Naive thymus-derived CD4-positive, alpha-beta T cell (primary cell): ENCODE measurements at regions of chr6 and their contacts with region 1.

Region 1: GRCh38 chr6:144447472-144447871 is 162.3 kb downstream of the UTRN start:
- DNase-seq: no peak
- ATAC-seq: no peak
- H3K4me3 ChIP-seq: no peak overlapping the region
- H3K4me3 Mint-ChIP-seq: no peak overlapping the region
- H3K27ac ChIP-seq: no peak overlapping the region
- H3K27ac Mint-ChIP-seq: no peak overlapping the region
- H3K4me1 ChIP-seq: no peaks in the 10 kb centered on the region
- H3K4me1 Mint-ChIP-seq: peaks cover 0 to 5% (median 0%) of the 10 kb centered on the region in 7 donors
- H3K27me3 ChIP-seq: no peaks in the 10 kb centered on the region
- H3K27me3 Mint-ChIP-seq: no peaks in the 10 kb centered on the region

Region 2: DNA sequence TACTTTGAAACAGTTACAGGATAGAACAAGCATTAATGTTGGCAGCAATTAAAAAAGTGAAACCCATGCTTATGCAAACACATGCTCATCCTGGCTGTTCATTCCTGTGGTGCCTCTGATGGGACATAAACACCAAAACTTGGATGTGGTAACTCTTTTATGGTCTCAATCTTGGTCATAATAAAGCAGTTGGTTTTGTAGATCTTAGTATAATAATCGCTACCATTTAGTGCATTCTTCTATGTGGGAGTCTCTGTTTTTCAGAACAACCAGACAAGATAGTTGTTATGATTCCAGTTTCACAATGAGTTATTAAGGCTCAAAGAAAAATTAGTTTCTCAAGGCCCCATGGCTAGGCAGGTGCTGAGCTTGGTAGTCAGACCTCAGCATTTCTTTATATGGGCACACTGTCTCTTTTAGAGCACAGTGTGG is 21.7 kb after region 1 on chr6:
- CTCF ChIA-PET with region 1: no interaction called
- POLR2A ChIA-PET with region 1: interaction called, 4 read pairs
- intact Hi-C with region 1: loop called in 1 of 2 experiments (anchors 1 kb)
- DNase-seq: no peak
- ATAC-seq: no peak
- H3K4me3 ChIP-seq: peak overlapping the region; percentile 10
- H3K4me3 Mint-ChIP-seq: peak overlapping the region in 8 of 10 donors; percentile 33 to 82 (median 65)
- H3K27ac ChIP-seq: peak overlapping the region; percentile 12
- H3K27ac Mint-ChIP-seq: peak overlapping the region; percentile 9 to 87 (median 79)
- H3K4me1 ChIP-seq: peaks cover 11 to 14% of the 10 kb centered on the region in 2 donors
- H3K4me1 Mint-ChIP-seq: peaks cover 11 to 34% (median 29%) of the 10 kb centered on the region in 7 donors
- H3K27me3 ChIP-seq: no peaks in the 10 kb centered on the region
- H3K27me3 Mint-ChIP-seq: no peaks in the 10 kb centered on the region